ENCODE measurements at regions of chr17 and their contacts with region 1.

Region 1: DNA sequence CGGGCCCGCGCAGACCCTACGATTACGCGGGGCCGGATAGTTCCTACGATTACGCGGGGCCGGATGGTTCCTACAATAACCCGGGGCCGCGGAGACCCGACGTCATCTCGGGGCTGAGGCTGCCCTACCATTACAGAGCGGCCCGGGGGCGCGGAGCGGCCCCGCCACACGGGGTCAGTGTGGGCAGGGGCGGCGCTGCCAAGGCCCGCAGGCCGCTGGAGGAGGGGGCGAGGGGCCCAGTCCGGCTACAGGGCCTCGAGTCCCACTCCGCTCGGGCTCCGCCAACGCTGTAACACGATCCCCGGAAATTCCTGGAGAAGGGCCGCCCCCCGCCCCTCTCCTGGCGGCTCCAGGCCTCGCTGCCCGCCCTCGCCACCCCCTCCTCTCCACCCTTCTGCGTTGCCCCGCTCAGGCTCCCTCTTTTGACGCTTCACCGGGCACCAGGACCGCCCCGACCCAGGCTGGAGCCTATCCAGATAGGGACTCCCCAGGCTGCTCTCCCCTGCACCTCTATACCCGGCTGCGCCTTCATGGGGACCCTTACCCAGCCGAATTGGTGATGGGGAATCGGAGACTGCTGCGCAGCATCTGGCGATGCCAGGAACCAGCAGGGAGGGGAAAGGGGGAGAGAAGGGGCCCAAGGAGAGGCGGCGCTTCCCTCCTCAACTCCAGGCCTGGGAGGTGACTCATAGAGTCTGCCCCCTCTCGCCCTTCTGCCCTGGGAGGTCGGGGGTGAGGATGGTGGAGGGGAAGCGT is at the start of gene RAB34:
- DNase-seq: peak in 4 of 9 experiments; percentile 22 to 53 (median 33)
- ATAC-seq: no peak
- H3K4me3 ChIP-seq: no peak within 1 kb of the TSS
- H3K4me3 Mint-ChIP-seq: peak within 1 kb of the TSS; percentile 59
- H3K27ac ChIP-seq: no peak within 1 kb of the TSS
- H3K27ac Mint-ChIP-seq: peak within 1 kb of the TSS; percentile 55
- H3K4me1 ChIP-seq: peaks cover 28% of the 10 kb centered on the region
- H3K4me1 Mint-ChIP-seq: peaks cover 39% of the 10 kb centered on the region
- H3K27me3 ChIP-seq: peaks cover 0 to 12% of the 10 kb centered on the region in 2 experiments
- H3K27me3 Mint-ChIP-seq: peaks cover 16% of the 10 kb centered on the region
- CTCF ChIP-seq: no peak
- total RNA-seq, gene RAB34: 13.9 to 14.1 TPM

Region 2: DNA sequence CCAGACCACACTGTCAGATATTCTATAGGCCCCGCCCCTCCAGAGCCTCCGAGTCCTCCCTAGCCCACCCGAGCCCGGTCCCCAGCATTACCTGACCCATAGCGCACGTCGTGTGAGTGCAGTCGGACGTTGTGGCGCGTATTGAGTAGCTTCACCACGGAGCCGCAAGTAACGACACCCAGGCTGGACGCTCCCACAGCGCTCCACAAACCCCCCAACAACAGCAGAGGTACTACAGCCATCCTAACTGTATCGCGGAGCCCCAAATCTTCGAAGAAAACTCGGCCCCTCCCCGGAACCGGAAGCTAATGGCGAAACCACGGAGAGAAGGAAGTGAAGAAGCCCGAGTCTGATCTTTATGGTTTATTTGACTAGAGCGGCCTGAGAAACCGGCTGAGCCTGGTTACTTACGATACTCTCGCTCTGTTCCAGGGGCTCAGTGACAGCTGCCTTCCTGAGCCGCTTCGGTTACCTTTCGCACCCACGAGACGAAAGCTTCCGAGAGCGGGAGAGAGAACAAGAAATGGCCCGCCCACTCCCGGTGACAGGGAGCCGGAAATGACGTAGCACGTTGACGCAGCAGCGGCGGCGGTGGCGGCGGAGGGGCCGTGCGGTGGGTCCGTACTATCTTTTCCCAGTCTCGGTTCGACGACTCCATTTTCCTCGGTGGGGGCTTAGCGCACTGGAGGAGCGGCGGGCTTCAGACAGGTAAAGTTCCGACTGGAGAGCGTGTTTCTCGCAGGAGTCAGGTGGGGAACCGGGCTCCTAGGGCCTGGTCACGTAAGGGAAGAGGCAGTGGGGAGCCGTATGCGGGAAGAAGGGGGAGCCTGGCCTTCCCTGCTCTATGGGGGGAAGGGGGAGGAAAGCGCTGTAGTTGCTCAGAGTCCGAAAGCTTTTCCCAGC is 55.9 kb before region 1 on chr17 and contains the starts of genes SDF2 and SUPT6H:
- CTCF ChIA-PET with region 1: interaction called, 3 read pairs
- POLR2A ChIA-PET with region 1: interaction called, 18 read pairs
- intact Hi-C with region 1: loop called (anchors 2 kb)
- DNase-seq: peak; percentile 83 to 97 (median 96)
- ATAC-seq: peak; percentile 85
- H3K4me3 ChIP-seq: peak within 1 kb of the TSS; percentile 91 to 94
- H3K4me3 Mint-ChIP-seq: peak within 1 kb of the TSS; percentile 98
- H3K27ac ChIP-seq: peak within 1 kb of the TSS; percentile 98 to 99
- H3K27ac Mint-ChIP-seq: peak within 1 kb of the TSS; percentile 99
- H3K4me1 ChIP-seq: peaks cover 43% of the 10 kb centered on the region
- H3K4me1 Mint-ChIP-seq: peaks cover 60% of the 10 kb centered on the region
- H3K27me3 ChIP-seq: no peaks in the 10 kb centered on the region
- H3K27me3 Mint-ChIP-seq: no peaks in the 10 kb centered on the region
- CTCF ChIP-seq: peak; percentile 20
- total RNA-seq, gene SDF2: 30.4 to 38.3 TPM
- total RNA-seq, gene SUPT6H: 163 to 169 TPM

Region 3: GRCh38 chr17:28693869-28694268 is 23.9 kb before region 1 on chr17:
- CTCF ChIA-PET with region 1: no interaction called
- POLR2A ChIA-PET with region 1: no interaction called
- intact Hi-C with region 1: no loop called
- DNase-seq: no peak
- ATAC-seq: no peak
- H3K4me3 ChIP-seq: no peak overlapping the region
- H3K4me3 Mint-ChIP-seq: no peak overlapping the region
- H3K27ac ChIP-seq: no peak overlapping the region
- H3K27ac Mint-ChIP-seq: no peak overlapping the region
- H3K4me1 ChIP-seq: no peaks in the 10 kb centered on the region
- H3K4me1 Mint-ChIP-seq: no peaks in the 10 kb centered on the region
- H3K27me3 ChIP-seq: no peaks in the 10 kb centered on the region
- H3K27me3 Mint-ChIP-seq: no peaks in the 10 kb centered on the region
- CTCF ChIP-seq: no peak

Region 4: GRCh38 chr17:28743225-28744103 is 25.7 kb after region 1 on chr17 and contains the start of gene TRAF4:
- CTCF ChIA-PET with region 1: interaction called, 532 read pairs
- POLR2A ChIA-PET with region 1: interaction called, 10 read pairs
- intact Hi-C with region 1: loop called in 1 of 2 experiments (anchors 5 kb)
- DNase-seq: peak; percentile 44 to 91 (median 74)
- ATAC-seq: peak; percentile 87
- H3K4me3 ChIP-seq: peak within 1 kb of the TSS; percentile 69 to 72
- H3K4me3 Mint-ChIP-seq: peak within 1 kb of the TSS; percentile 88
- H3K27ac ChIP-seq: peak within 1 kb of the TSS; percentile 62 to 82
- H3K27ac Mint-ChIP-seq: peak within 1 kb of the TSS; percentile 84
- H3K4me1 ChIP-seq: peaks cover 33% of the 10 kb centered on the region
- H3K4me1 Mint-ChIP-seq: peaks cover 28% of the 10 kb centered on the region
- H3K27me3 ChIP-seq: no peaks in the 10 kb centered on the region
- H3K27me3 Mint-ChIP-seq: no peaks in the 10 kb centered on the region
- CTCF ChIP-seq: no peak
- total RNA-seq, gene TRAF4: 418 to 439 TPM

Region 5: DNA sequence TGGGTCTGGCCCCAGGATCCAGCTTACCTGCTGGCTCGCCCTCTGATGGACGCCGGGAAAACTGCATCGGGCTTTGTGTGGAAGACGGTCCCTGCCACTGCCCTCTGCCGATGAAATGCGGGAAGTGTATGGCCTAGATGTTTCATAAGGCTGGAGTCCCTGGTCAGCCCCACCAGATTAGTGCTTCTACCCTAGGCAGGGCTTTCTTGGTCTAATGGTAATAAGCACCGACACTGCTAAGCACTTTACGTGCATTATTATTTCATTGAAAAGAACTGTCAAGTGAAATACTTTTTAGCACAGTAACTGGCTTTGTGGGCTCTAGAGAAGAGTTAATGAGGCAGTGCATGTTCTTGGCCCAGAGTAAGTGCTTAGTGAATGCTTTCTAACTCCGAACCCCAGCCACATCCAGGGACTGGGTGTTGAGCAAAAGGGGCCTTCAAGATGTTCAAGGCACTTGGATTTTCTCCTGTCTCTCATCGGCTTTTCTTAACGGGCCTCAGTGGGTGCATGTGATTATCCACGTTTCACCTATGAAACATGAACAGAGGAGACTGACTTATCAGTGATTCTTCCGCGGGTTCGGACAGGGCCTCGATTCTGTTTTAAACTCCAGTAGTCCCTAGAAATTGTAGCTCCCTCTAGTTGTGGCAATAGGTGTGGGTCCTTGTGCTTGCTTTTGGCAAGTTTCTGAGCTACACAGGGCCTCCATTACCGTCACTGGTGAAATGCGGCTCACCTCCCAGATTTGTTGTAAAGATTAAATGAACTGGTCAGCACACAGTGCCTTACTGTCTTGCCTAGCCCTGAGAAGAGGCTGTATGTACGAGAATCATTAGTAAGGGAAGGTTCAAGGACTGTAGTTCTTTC is 32.7 kb after region 1 on chr17:
- CTCF ChIA-PET with region 1: interaction called, 532 read pairs
- POLR2A ChIA-PET with region 1: interaction called, 10 read pairs
- intact Hi-C with region 1: loop called in 1 of 2 experiments (anchors 5 kb)
- DNase-seq: peak; percentile 69 to 93 (median 89)
- ATAC-seq: peak; percentile 93
- H3K4me3 ChIP-seq: no peak overlapping the region
- H3K4me3 Mint-ChIP-seq: no peak overlapping the region
- H3K27ac ChIP-seq: no peak overlapping the region
- H3K27ac Mint-ChIP-seq: no peak overlapping the region
- H3K4me1 ChIP-seq: peaks cover 15% of the 10 kb centered on the region
- H3K4me1 Mint-ChIP-seq: peaks cover 16% of the 10 kb centered on the region
- H3K27me3 ChIP-seq: no peaks in the 10 kb centered on the region
- H3K27me3 Mint-ChIP-seq: no peaks in the 10 kb centered on the region
- CTCF ChIP-seq: peak; percentile 99

Region 6: DNA sequence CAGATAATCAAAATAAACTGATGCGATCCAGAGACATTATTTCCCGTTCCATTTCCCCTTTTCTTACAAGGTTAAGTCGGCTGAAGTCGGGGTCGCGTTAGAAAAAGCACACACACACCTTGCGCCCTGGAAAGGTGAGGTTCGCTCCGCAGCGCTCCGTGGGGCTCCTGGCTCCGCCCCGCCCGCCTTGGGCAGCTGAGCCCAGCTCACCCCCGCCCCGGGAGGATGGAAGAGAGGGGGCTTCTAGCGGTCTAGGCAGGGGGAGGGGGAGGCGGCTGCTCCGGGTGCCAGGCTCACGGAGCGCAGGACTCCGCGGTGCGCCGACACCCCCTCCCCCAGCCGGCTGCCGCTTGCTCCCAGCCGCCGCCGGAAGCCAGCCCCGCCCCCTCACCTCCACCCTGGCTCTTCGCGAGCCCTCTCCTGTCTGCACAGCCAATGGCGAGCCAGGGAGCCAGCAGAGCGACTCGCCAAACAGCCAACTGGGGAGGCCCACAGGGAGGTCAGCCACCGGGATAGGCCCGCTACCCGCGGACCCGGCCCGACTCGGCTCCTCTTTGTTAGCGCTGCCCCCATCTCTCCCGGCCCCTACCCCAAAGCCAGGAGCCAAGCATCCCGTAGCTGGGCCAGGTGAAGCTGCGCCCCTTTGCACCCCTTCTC is 94.5 kb after region 1 on chr17:
- CTCF ChIA-PET with region 1: no interaction called
- POLR2A ChIA-PET with region 1: no interaction called
- intact Hi-C with region 1: loop called in 1 of 2 experiments (anchors 2 kb)
- DNase-seq: peak; percentile 90 to 98 (median 96)
- ATAC-seq: peak; percentile 96
- H3K4me3 ChIP-seq: peak overlapping the region; percentile 67 to 99
- H3K4me3 Mint-ChIP-seq: peak overlapping the region; percentile 94
- H3K27ac ChIP-seq: peak overlapping the region; percentile 93 to 96
- H3K27ac Mint-ChIP-seq: peak overlapping the region; percentile 93
- H3K4me1 ChIP-seq: peaks cover 18% of the 10 kb centered on the region
- H3K4me1 Mint-ChIP-seq: peaks cover 35% of the 10 kb centered on the region
- H3K27me3 ChIP-seq: no peaks in the 10 kb centered on the region
- H3K27me3 Mint-ChIP-seq: no peaks in the 10 kb centered on the region
- CTCF ChIP-seq: no peak

Region 7: GRCh38 chr17:28854457-28855350 is 136.9 kb after region 1 on chr17 and contains the start of gene ERAL1:
- CTCF ChIA-PET with region 1: no interaction called
- POLR2A ChIA-PET with region 1: no interaction called
- intact Hi-C with region 1: loop called in 1 of 2 experiments (anchors 1 kb)
- DNase-seq: peak; percentile 62 to 90 (median 84)
- ATAC-seq: peak; percentile 99
- H3K4me3 ChIP-seq: peak within 1 kb of the TSS; percentile 75 to 96
- H3K4me3 Mint-ChIP-seq: peak within 1 kb of the TSS; percentile 95
- H3K27ac ChIP-seq: peak within 1 kb of the TSS; percentile 61 to 74
- H3K27ac Mint-ChIP-seq: peak within 1 kb of the TSS; percentile 90
- H3K4me1 ChIP-seq: peaks cover 12% of the 10 kb centered on the region
- H3K4me1 Mint-ChIP-seq: peaks cover 18% of the 10 kb centered on the region
- H3K27me3 ChIP-seq: no peaks in the 10 kb centered on the region
- H3K27me3 Mint-ChIP-seq: no peaks in the 10 kb centered on the region
- CTCF ChIP-seq: no peak
- total RNA-seq, gene ERAL1: 20.0 to 21.2 TPM

Measured in CD8-positive, alpha-beta T cell (primary cell).